HEK293T (cell line): ENCODE measurements at regions of chr13 and their contacts with region 1.

Region 1: GRCh38 chr13:79528759-79529191 is 47.8 kb downstream of the NDFIP2 start:
- DNase-seq: peak; percentile 73

Region 2: DNA sequence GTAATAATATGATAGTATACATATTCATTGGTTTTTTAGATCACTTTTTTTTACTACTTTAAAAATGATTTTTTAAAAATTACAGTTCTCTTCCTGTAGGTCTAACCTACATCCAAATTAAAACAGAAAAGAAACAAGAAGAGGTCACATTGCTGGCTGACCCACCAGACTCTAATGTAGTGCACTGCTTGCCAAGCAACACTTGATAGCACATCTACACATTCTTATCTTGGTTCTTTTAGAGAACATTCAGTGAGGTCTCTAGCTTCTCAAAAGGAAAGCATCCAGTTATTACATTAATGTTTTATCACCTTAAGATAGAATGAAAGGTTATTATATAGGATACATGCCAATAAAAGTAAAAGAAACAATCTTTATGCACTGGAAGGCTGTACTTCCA is 12.2 kb before region 1 on chr13:
- CTCF ChIA-PET with region 1: interaction called, 11 read pairs
- POLR2A ChIA-PET with region 1: interaction called, 5 read pairs
- DNase-seq: no peak

Region 3: GRCh38 chr13:79901336-79901735 is 372.6 kb after region 1 on chr13:
- CTCF ChIA-PET with region 1: no interaction called
- POLR2A ChIA-PET with region 1: no interaction called
- DNase-seq: no peak